A673 (cell line): ENCODE measurements at regions of chr17 and their contacts with region 1.

Region 1: GRCh38 chr17:57365420-57365819 is 109.1 kb downstream of the MSI2 start:
- DNase-seq: peak; percentile 23
- H3K4me3 ChIP-seq: no peak overlapping the region
- H3K27ac ChIP-seq: no peak overlapping the region
- H3K4me1 ChIP-seq: peaks cover 33% of the 10 kb centered on the region
- H3K27me3 ChIP-seq: no peaks in the 10 kb centered on the region
- CTCF ChIP-seq: no peak

Region 2: GRCh38 chr17:57391076-57391825 is 25.8 kb after region 1 on chr17:
- CTCF ChIA-PET with region 1: interaction called, 12 read pairs
- POLR2A ChIA-PET with region 1: no interaction called
- intact Hi-C with region 1: no loop called
- DNase-seq: no peak
- H3K4me3 ChIP-seq: no peak overlapping the region
- H3K27ac ChIP-seq: no peak overlapping the region
- H3K4me1 ChIP-seq: no peaks in the 10 kb centered on the region
- H3K27me3 ChIP-seq: no peaks in the 10 kb centered on the region
- CTCF ChIP-seq: no peak

Region 3: GRCh38 chr17:57424777-57425188 is 59.4 kb after region 1 on chr17:
- CTCF ChIA-PET with region 1: no interaction called
- POLR2A ChIA-PET with region 1: no interaction called
- intact Hi-C with region 1: no loop called
- DNase-seq: peak; percentile 95
- H3K4me3 ChIP-seq: no peak overlapping the region
- H3K27ac ChIP-seq: peak overlapping the region; percentile 77
- H3K4me1 ChIP-seq: peaks cover 60% of the 10 kb centered on the region
- H3K27me3 ChIP-seq: no peaks in the 10 kb centered on the region
- CTCF ChIP-seq: no peak